ENCODE measurements at regions of chr3 and their contacts with region 1.

Region 1: DNA sequence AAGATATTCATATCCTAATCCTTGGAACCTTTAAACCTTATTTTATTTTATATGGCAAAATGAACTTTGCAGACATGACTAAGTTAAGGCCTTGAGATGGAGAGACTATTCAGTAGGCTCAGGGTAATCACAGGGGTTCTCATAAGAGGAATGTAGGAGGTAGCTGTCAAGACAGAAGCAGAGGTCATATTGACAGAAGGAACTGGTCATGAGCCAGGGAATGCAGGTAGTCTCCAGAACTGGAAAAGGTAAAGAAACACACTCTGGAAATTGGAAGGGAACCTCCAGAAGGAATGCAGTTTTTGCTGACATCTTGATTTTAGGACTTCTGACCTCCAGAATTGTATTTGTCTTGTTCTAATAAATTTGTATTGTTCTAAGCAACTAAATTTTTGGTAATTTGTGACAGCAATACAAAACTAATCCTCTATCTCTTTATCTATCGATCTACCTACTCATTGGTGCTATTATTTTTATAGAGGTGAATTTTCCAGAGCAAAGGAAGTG is 49.2 kb downstream of the OTOL1 start:
- DNase-seq: no peak
- H3K4me3 ChIP-seq: no peak overlapping the region
- H3K4me3 Mint-ChIP-seq: no peak overlapping the region
- H3K27ac Mint-ChIP-seq: no peak overlapping the region
- H3K4me1 ChIP-seq: no peaks in the 10 kb centered on the region
- H3K4me1 Mint-ChIP-seq: no peaks in the 10 kb centered on the region
- H3K27me3 ChIP-seq: no peaks in the 10 kb centered on the region
- H3K27me3 Mint-ChIP-seq: peaks cover 5% of the 10 kb centered on the region
- CTCF ChIP-seq: no peak

Region 2: DNA sequence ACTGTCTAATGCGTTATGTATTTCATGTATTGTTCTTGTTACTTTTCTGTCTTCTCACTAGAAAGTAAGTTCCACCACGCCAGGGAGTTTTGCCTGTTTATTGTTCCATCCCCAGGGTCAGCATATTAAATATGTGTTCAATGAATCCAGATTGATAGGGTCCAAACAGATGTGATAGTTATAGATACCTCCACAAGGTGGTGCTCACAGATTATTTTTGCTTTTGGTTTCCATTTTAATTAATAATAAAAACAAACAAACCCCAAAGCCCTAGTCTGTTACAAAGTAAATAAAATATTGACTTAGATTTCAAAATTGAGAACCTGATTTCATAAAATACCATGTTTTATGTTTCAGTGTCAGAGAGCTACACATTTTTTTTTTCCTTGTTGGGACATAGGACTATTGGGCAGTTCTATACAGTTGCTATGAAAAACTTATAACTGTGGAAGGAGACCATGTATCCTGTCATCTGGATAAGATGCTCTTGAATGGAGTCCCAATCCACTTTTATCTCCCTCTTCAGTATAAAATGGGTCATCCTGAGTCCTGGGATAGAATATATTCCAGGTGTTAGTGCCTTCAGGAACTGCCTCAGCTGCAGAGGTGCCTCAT is 36.8 kb before region 1 on chr3:
- CTCF ChIA-PET with region 1: no interaction called
- POLR2A ChIA-PET with region 1: no interaction called
- intact Hi-C with region 1: loop called (anchors 1 kb)
- DNase-seq: no peak
- H3K4me3 ChIP-seq: no peak overlapping the region
- H3K4me3 Mint-ChIP-seq: no peak overlapping the region
- H3K27ac Mint-ChIP-seq: no peak overlapping the region
- H3K4me1 ChIP-seq: no peaks in the 10 kb centered on the region
- H3K4me1 Mint-ChIP-seq: no peaks in the 10 kb centered on the region
- H3K27me3 ChIP-seq: no peaks in the 10 kb centered on the region
- H3K27me3 Mint-ChIP-seq: peaks cover 7% of the 10 kb centered on the region
- CTCF ChIP-seq: no peak

Region 3: DNA sequence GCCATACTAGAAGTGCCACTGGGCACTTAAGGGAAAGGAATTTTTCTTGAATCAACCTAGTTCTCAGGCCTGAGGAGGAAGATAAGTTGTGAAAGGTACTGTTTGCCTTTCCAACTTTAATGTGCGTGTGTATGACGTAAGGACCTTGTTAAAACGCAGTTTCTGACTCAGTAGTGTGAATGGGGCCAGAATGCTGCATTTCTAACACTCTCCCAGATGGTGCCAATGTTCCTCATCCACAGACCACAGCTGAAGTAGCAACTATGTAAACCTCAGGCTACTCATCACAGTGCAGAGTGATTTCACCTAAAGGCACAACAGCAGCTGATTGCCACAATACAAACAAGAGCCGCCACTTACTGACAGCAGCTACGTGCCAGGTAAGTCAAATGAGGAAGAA is 54.4 kb after region 1 on chr3:
- CTCF ChIA-PET with region 1: no interaction called
- POLR2A ChIA-PET with region 1: no interaction called
- intact Hi-C with region 1: no loop called
- DNase-seq: no peak
- H3K4me3 ChIP-seq: no peak overlapping the region
- H3K4me3 Mint-ChIP-seq: no peak overlapping the region
- H3K27ac Mint-ChIP-seq: no peak overlapping the region
- H3K4me1 ChIP-seq: no peaks in the 10 kb centered on the region
- H3K4me1 Mint-ChIP-seq: no peaks in the 10 kb centered on the region
- H3K27me3 ChIP-seq: no peaks in the 10 kb centered on the region
- H3K27me3 Mint-ChIP-seq: peaks cover 2% of the 10 kb centered on the region
- CTCF ChIP-seq: no peak

Measured in Caco-2 (cell line).